Activated CD4-positive, alpha-beta memory T cell treated with anti-CD3 and anti-CD28 coated beads for 36 hours (primary cell): ENCODE measurements at regions of chr6 and their contacts with region 1.

Region 1: DNA sequence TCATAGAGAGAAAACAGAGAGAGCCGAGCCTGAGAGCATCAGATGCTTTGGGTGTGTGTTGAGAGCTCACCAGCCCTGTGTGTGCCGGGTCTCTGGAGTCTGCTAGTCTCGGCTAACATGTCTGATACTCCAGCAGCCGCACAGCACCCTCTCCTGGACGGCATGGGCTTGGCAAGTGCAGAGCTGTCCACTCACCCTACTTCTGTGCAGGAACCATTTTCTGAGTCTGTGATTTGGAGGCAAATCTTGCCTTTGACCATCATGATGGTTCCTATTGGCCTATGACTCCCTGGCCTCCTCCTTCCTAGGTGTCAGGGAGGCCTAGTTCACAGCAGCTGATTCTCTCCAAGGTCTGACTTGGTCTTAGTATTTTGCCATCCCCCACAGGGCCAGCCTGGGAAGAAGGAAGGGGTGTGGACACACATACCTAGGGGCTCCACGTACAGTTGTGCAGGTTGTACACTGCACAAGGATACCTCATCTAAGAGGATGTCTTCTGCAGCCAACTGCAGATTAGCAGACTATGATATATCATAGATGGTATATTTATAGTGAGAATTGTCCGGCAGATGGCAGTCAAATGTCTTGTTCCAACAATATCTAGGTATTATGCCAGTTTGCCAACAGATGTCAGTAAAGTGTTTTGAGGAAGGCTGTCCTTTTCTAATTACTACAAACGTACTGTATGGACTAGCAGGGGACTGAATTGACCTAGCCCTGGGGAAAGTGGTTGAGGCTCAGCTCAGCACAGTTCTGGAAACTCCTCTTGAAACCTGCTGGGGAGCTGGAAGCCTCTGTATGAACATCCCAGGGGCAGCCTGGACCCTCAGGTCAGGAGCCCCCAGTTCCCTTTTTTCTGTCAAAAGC is 13.0 kb downstream of the FGD2 start:
- DNase-seq: peak; percentile 96
- H3K4me3 Mint-ChIP-seq: no peak overlapping the region
- H3K27ac Mint-ChIP-seq: peak overlapping the region; percentile 61
- H3K4me1 Mint-ChIP-seq: peaks cover 44% of the 10 kb centered on the region
- H3K27me3 Mint-ChIP-seq: no peaks in the 10 kb centered on the region

Region 2: GRCh38 chr6:36765594-36766398 is 252.6 kb before region 1 on chr6:
- CTCF ChIA-PET with region 1: interaction called, 130 read pairs
- POLR2A ChIA-PET with region 1: interaction called, 7 read pairs
- intact Hi-C with region 1: loop called (anchors 1 kb)
- DNase-seq: peak; percentile 89
- H3K4me3 Mint-ChIP-seq: no peak overlapping the region
- H3K27ac Mint-ChIP-seq: no peak overlapping the region
- H3K4me1 Mint-ChIP-seq: peaks cover 25% of the 10 kb centered on the region
- H3K27me3 Mint-ChIP-seq: no peaks in the 10 kb centered on the region

Region 3: GRCh38 chr6:36885461-36886401 is 132.7 kb before region 1 on chr6 and contains the start of gene C6orf89:
- CTCF ChIA-PET with region 1: interaction called, 138 read pairs
- POLR2A ChIA-PET with region 1: interaction called, 10 read pairs
- intact Hi-C with region 1: loop called (anchors 1 kb)
- DNase-seq: peak; percentile 98
- H3K4me3 Mint-ChIP-seq: peak within 1 kb of the TSS; percentile 88
- H3K27ac Mint-ChIP-seq: peak within 1 kb of the TSS; percentile 92
- H3K4me1 Mint-ChIP-seq: peaks cover 36% of the 10 kb centered on the region
- H3K27me3 Mint-ChIP-seq: no peaks in the 10 kb centered on the region
- total RNA-seq, gene C6orf89: 29.2 to 29.8 TPM

Region 4: DNA sequence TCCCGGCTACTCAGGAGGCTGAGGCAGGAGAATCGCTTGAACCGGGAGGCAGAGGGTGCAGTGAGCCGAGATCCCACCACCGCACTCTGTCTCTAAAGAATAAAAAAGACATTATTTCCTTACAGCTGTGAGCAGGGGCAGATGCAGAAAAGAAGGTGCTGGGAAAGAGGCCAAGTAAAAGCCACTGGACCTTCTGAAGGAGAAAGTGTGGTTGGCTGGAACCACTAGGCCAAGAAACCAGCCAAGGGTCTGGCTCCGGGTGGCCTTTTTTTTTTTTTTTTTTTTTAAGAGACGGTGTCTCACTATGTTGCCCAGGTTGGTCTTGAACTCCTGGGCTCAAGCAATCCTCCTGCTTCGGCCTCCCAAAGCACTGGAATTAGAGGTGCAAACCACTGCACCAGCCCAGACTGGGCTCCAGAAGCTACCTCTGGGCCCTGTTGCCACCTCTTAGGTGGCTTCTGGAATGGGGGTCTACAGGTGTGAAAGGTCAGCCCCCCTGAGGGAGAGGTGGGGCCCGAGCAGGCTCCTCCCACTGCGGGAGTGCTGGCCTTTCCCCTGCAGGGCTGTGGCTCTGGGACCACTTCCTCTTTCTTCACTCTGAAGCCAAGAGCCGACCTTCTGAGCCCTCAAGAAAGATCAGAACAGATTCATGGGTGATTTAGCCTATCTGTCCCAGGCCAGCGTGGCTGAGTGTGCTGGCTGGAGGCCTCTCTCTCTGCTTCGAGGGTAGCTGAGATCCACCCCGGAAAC is 13.2 kb before region 1 on chr6 and contains the start of gene FGD2:
- CTCF ChIA-PET with region 1: interaction called, 35 read pairs
- POLR2A ChIA-PET with region 1: interaction called, 3 read pairs
- intact Hi-C with region 1: no loop called
- DNase-seq: no peak
- H3K4me3 Mint-ChIP-seq: no peak within 1 kb of the TSS
- H3K27ac Mint-ChIP-seq: no peak within 1 kb of the TSS
- H3K4me1 Mint-ChIP-seq: peaks cover 17% of the 10 kb centered on the region
- H3K27me3 Mint-ChIP-seq: no peaks in the 10 kb centered on the region
- total RNA-seq, gene FGD2: 0.48 to 0.52 TPM

Region 5: DNA sequence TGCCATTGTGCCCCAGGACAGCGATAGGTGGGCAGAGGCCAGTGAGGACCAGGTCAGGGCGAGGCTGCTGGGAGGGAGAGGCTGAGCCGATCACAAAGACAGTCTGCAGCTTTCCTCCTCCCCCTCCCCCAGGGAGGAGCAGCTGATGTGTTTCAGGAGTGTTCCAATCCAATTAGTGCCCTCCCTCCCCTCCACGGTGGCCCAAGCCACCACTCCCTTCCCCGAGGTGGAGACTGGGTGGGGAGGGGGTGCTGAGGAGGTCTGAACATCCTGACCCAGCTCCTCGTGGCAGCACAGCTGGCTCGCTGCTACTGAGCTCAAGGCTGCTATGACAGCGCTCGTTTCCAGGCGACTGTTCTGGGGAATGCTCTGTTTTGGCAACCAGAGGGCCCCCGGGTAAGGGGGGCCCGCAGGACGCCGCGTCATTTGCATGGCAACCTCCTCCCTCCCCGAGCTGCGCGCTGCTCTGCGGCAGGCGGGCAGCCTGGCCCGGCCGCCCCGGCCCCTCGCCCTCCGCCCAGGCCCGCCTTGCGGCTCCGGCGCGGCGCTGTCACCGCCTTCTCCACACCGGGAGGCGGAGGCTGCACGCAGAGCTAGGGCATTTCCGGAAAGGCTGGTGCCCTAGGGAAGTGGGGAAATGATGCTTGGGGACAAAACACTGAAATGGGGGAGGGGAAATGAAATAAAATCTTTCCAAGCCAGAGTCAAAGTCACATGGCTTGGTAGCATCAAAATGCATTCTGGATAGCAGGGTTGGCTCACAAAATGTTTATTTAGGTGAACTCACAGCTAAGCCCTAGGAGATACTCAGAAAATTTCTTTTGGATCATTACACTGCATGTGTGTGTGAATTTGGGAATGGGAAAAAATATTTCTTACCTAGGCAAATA is 84.1 kb after region 1 on chr6:
- CTCF ChIA-PET with region 1: interaction called, 10 read pairs
- POLR2A ChIA-PET with region 1: no interaction called
- intact Hi-C with region 1: no loop called
- DNase-seq: peak; percentile 87
- H3K4me3 Mint-ChIP-seq: peak overlapping the region; percentile 65
- H3K27ac Mint-ChIP-seq: peak overlapping the region; percentile 79
- H3K4me1 Mint-ChIP-seq: peaks cover 30% of the 10 kb centered on the region
- H3K27me3 Mint-ChIP-seq: no peaks in the 10 kb centered on the region

Region 6: GRCh38 chr6:37207903-37208456 is 189.5 kb after region 1 on chr6:
- CTCF ChIA-PET with region 1: interaction called, 850 read pairs
- POLR2A ChIA-PET with region 1: interaction called, 11 read pairs
- intact Hi-C with region 1: loop called (anchors 1 kb)
- DNase-seq: peak; percentile 95
- H3K4me3 Mint-ChIP-seq: no peak overlapping the region
- H3K27ac Mint-ChIP-seq: peak overlapping the region; percentile 69
- H3K4me1 Mint-ChIP-seq: peaks cover 63% of the 10 kb centered on the region
- H3K27me3 Mint-ChIP-seq: no peaks in the 10 kb centered on the region

Region 7: GRCh38 chr6:37265860-37266259 is 247.4 kb after region 1 on chr6:
- CTCF ChIA-PET with region 1: no interaction called
- POLR2A ChIA-PET with region 1: no interaction called
- intact Hi-C with region 1: no loop called
- DNase-seq: no peak
- H3K4me3 Mint-ChIP-seq: no peak overlapping the region
- H3K27ac Mint-ChIP-seq: no peak overlapping the region
- H3K4me1 Mint-ChIP-seq: peaks cover 43% of the 10 kb centered on the region
- H3K27me3 Mint-ChIP-seq: no peaks in the 10 kb centered on the region